HCT116 (cell line): ENCODE measurements at regions of chr19 and their contacts with region 1.

Region 1: DNA sequence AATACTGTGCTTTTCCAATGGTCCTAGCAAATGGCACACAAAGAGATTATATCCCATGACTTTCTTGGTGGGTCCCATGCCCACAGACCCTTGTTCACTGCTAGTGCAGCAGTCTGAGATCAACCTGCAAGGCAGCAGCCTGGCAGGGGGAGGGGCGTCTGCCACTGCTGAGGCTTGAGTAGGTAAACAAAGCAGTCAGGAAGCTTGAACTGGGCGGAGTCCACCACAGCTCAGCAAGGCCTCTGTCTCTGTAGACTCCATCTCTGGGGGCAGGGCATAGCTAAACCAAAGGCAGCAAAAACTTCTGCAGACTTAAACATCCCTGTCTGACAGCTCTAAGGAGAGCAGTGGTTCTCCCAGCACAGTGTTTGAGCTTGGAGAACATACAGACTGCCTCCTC is 82.9 kb downstream of the ZNF737 start:
- DNase-seq: no peak
- ATAC-seq: no peak
- H3K4me3 ChIP-seq: no peak overlapping the region
- H3K27ac ChIP-seq: no peak overlapping the region
- H3K4me1 ChIP-seq: no peaks in the 10 kb centered on the region
- H3K27me3 ChIP-seq: no peaks in the 10 kb centered on the region
- CTCF ChIP-seq: no peak
- POLR2A ChIP-seq: no peak
- RAD21 ChIP-seq: no peak

Region 2: DNA sequence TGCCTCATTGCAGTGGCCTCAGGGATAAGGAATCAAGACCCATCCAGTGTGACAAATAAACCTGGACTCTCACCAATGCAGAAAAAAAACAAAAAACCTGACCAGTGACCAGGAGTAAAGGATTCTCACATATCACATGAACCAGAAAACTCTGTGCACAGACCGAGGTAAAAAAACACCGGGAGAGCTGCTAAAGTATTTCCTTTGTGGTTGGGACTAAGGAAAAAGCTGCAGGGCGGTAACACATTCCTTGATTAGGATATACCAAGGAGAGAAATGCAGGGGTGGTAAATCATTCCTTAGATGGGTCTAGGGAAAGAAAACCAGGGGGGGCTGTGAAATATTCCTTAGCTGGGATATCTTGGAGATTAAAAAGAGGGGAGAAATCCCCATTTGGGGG is 375.5 kb after region 1 on chr19:
- CTCF ChIA-PET with region 1: no interaction called
- POLR2A ChIA-PET with region 1: no interaction called
- RAD21 ChIA-PET with region 1: no interaction called
- intact Hi-C with region 1: loop called (anchors 5 kb)
- DNase-seq: no peak
- ATAC-seq: no peak
- H3K4me3 ChIP-seq: no peak overlapping the region
- H3K27ac ChIP-seq: no peak overlapping the region
- H3K4me1 ChIP-seq: no peaks in the 10 kb centered on the region
- H3K27me3 ChIP-seq: no peaks in the 10 kb centered on the region
- CTCF ChIP-seq: no peak
- POLR2A ChIP-seq: no peak
- RAD21 ChIP-seq: no peak